IMR-90 (cell line): ENCODE measurements at regions of chr9 and their contacts with region 1.

Region 1: GRCh38 chr9:33682551-33682950 is 112.8 kb upstream of the PRSS3 start:
- DNase-seq: no peak
- ATAC-seq: no peak
- H3K4me3 ChIP-seq: no peak overlapping the region
- H3K27ac ChIP-seq: no peak overlapping the region
- H3K4me1 ChIP-seq: no peaks in the 10 kb centered on the region
- H3K27me3 ChIP-seq: peaks cover 10% of the 10 kb centered on the region
- CTCF ChIP-seq: no peak
- POLR2A ChIP-seq: no peak
- RAD21 ChIP-seq: no peak

Region 2: GRCh38 chr9:33638391-33638915 is 44.1 kb before region 1 on chr9:
- CTCF ChIA-PET with region 1: no interaction called
- POLR2A ChIA-PET with region 1: no interaction called
- dilution Hi-C with region 1: no loop called
- in situ Hi-C with region 1: no loop called
- intact Hi-C with region 1: loop called (anchors 5 kb)
- DNase-seq: no peak
- ATAC-seq: no peak
- H3K4me3 ChIP-seq: no peak overlapping the region
- H3K27ac ChIP-seq: no peak overlapping the region
- H3K4me1 ChIP-seq: no peaks in the 10 kb centered on the region
- H3K27me3 ChIP-seq: peaks cover 41% of the 10 kb centered on the region
- CTCF ChIP-seq: no peak
- POLR2A ChIP-seq: no peak
- RAD21 ChIP-seq: no peak

Region 3: GRCh38 chr9:34126207-34127034 is 443.9 kb after region 1 on chr9 and contains the start of gene DCAF12:
- CTCF ChIA-PET with region 1: no interaction called
- POLR2A ChIA-PET with region 1: no interaction called
- dilution Hi-C with region 1: no loop called
- in situ Hi-C with region 1: no loop called
- intact Hi-C with region 1: no loop called
- DNase-seq: peak; percentile 87
- ATAC-seq: peak; percentile 96
- H3K4me3 ChIP-seq: peak within 1 kb of the TSS; percentile 64
- H3K27ac ChIP-seq: peak within 1 kb of the TSS; percentile 96
- H3K4me1 ChIP-seq: peaks cover 8% of the 10 kb centered on the region
- H3K27me3 ChIP-seq: no peaks in the 10 kb centered on the region
- CTCF ChIP-seq: no peak
- POLR2A ChIP-seq: peak; percentile 70
- RAD21 ChIP-seq: no peak; the same call in 1 of the 2 replicates
- total RNA-seq, gene DCAF12: 6.9 and 7.2 TPM in 2 replicates